ENCODE measurements at regions of chr1 and their contacts with region 1.

Region 1: DNA sequence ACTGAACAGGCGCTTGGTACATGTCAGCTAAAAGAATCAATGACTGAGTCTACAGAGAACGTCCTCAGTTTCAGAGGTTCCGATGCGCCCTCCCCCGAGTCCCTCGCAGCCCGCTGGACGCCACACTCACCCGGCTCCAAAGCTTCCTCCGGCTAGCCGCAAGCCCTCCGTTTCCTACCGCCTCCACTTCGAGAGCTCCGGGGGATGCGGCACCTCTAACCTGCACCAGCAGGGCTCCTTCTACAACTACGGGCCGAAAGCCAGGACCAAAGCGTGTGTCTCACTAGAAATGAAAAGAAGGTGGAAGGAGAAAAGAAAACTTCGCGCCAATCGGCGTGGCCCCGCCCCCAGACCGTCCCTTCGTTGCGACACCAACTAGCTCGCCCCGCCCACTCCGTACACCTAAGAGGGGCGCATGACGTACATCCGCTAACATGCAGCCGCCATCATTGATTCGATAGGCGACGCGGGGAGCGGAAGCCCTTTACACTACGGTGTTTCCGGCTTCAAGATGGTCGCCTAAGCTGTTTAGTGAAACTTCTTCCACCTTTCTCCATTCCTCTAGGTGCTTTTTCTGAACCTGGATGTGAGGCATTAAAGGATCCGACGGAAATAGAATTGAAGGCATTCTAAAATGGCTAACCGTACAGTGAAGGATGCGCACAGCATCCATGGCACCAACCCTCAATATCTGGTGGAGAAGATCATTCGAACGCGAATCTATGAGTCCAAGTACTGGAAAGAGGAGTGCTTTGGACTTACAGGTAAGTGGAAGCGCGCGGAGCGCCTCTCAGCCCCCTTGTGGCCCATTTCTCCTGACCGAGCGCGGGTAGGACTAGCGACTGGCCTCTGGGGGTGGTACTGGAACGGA is at the starts of genes ORC1 and PRPF38A:
- DNase-seq: peak; percentile 99
- ATAC-seq: peak; percentile 90
- H3K4me3 Mint-ChIP-seq: peak within 1 kb of the TSS; percentile 100
- H3K27ac Mint-ChIP-seq: peak within 1 kb of the TSS; percentile 100
- H3K4me1 Mint-ChIP-seq: peaks cover 60% of the 10 kb centered on the region
- H3K27me3 Mint-ChIP-seq: no peaks in the 10 kb centered on the region
- total RNA-seq, gene ORC1: 40.5 to 42.2 TPM
- total RNA-seq, gene PRPF38A: 87.0 to 97.4 TPM

Region 2: DNA sequence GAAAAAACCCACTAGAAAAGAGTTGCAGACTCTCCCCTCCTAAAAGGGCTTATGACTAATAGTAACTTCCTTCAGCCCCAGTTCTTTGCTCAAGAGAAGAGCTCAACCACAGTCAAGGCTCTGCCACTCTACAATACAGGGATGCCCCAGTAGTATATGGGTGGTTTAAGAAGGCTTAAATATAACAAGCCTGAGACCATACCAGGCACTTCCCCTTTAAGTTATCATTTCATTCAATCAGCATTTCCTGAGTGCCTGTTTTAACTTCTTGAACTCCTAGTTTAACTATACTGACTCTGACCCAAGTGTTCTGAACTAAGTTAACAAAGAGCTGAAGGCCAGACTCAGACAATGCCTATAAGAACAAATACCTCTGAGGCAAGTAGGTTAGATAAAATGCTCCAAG is 19.9 kb after region 1 on chr1:
- CTCF ChIA-PET with region 1: interaction called, 20 read pairs
- DNase-seq: peak; percentile 47
- ATAC-seq: peak; percentile 88
- H3K4me3 Mint-ChIP-seq: peak overlapping the region; percentile 55
- H3K27ac Mint-ChIP-seq: peak overlapping the region; percentile 92
- H3K4me1 Mint-ChIP-seq: peaks cover 38% of the 10 kb centered on the region
- H3K27me3 Mint-ChIP-seq: no peaks in the 10 kb centered on the region